ENCODE measurements at regions of chr19 and their contacts with region 1.

Region 1: DNA sequence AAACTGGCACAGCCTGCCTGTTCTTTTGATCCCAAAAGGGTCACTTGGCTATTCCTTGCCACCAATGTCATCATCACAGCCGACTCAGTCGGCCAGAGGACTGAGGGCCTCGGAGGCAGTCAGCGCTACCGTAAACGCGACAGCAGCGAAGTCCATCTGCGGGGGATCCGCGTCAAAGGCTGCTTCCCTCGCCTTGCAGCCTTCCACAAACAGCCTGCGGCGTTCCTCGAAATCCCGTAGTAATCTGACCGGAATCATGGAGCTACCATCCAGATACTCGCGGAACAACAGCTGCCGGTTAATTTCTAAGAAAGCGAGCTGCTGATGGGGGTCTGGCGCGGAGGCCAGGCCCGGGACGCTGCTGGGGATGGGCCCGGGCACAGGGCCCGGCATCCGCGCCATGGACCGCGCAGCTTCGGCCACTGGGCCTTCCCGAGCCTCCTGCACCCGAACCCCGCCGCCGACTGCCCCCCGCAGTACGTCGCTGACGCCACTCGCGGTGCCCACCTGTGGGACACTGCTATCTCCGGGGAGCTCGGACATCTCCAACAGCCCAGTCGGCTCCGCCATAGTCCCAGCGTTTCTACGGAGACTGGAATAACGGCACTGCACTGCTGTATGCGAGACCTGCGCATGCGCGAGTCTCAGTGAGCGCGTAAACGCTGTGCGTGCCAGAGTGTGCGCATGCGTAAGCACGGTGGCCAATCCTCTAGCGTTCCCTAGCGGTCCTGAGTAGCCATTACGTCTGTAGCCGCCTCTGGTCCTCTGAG is at the start of gene EID2B:
- DNase-seq: peak; percentile 94 to 96
- H3K4me3 ChIP-seq: peak within 1 kb of the TSS; percentile 90 to 91
- H3K27ac ChIP-seq: peak within 1 kb of the TSS; percentile 85 to 89
- H3K4me1 ChIP-seq: peaks cover 0 to 29% (median 21%) of the 10 kb centered on the region in 4 donors
- H3K27me3 ChIP-seq: no peaks in the 10 kb centered on the region
- CTCF ChIP-seq: peak; percentile 98 to 99

Region 2: DNA sequence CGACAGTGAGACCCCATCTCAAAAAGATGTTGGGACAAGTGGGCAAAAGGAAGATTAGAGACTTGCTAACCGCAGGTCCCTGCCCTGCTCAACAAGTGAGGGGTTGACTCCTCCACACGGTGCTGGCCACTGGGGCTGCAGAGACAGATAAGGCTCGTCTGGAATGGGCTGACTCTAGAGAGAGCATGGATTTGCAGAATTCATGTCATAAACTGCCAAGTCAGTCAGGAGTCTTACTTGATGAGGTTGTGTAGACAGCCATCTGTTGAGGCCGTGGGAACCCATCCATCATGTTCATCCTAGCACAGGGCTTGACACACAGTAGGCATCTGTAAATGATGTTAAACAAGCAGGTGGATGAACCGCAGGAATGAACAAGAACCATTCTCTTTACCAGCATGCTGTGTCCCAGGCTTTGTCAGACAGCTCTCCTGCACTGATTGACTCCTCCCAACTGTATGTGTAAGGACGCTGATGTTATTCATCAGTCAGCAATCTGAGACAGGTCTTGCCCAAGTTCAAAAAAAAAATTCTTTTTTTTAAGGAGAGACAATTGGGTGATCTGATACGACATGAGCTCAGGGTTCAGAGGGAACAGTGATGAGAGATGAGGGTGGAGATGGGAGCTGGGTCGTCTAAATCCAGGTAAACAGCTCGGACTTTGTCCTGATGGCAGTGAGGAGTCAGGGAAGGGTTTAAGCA is 150.4 kb before region 1 on chr19:
- intact Hi-C with region 1: no loop called
- DNase-seq: no peak
- H3K4me3 ChIP-seq: no peak overlapping the region
- H3K27ac ChIP-seq: no peak overlapping the region
- H3K4me1 ChIP-seq: no peaks in the 10 kb centered on the region
- H3K27me3 ChIP-seq: no peaks in the 10 kb centered on the region
- CTCF ChIP-seq: no peak

Region 3: DNA sequence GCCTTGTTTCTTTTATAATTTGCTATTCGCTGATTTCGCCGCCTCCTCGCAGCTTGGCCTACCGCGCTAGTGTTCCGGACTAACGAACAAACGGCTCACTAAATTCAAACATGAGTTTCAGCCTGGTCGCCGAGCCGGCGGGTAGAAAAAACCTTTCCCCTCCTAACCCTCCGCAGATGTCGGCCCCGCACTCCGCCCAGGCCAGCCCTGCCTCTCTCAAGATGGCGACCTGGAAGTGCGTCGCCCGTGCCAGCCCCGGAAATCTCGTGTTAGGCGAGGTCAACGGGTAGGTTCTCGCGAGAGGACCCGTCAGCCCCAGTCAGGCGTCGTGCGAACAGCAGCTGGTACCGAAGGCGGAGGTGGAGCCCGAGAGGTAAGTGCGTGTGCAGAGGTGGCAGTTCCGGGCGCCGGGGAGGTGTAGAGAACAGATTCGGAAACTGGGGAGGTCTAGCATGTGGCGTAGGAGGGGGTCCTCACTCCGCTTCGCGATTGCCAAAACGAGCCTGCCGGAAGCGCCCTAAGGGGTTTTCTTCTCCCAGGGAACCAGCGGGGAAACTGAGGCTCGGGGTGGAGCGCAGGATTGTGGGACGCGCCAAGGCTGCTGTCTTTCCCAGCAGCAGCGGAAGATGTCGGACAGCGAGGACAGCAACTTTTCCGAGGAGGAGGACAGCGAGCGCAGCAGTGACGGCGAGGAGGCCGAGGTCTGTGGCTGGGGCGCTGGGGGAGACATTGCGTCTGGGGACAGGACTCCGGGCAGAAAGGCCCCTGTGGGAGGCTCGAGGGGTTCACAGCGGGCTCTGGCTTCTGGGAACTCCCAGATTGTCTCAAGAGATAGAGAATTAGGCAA is 86.9 kb before region 1 on chr19 and contains the start of gene SUPT5H:
- intact Hi-C with region 1: loop called (anchors 5 kb)
- DNase-seq: peak; percentile 96 to 98
- H3K4me3 ChIP-seq: peak within 1 kb of the TSS; percentile 67 to 100
- H3K27ac ChIP-seq: peak within 1 kb of the TSS; percentile 86 to 87
- H3K4me1 ChIP-seq: peaks cover 0 to 52% (median 37%) of the 10 kb centered on the region in 4 donors
- H3K27me3 ChIP-seq: no peaks in the 10 kb centered on the region
- CTCF ChIP-seq: no peak

Region 4: DNA sequence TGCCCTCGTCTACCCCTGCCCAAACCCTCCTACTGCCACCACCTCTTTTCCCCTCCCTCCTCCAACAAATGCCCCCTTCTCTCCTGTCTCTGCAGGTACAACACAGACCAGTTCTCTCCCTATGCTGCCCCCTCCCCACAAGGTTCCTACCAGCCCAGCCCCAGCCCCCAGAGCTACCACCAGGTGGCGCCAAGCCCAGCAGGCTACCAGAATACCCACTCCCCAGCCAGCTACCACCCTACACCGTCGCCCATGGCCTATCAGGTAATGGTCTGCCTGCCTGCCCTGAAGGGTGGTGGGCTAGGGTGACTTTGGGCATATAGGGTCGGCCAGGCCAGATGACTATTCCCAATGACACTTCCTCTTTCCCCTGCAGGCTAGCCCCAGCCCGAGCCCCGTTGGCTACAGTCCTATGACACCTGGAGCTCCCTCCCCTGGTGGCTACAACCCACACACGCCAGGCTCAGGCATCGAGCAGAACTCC is 58.2 kb before region 1 on chr19:
- intact Hi-C with region 1: loop called (anchors 5 kb)
- DNase-seq: peak; percentile 41 to 73
- H3K4me3 ChIP-seq: no peak overlapping the region
- H3K27ac ChIP-seq: no peak overlapping the region
- H3K4me1 ChIP-seq: no peaks in the 10 kb centered on the region
- H3K27me3 ChIP-seq: no peaks in the 10 kb centered on the region
- CTCF ChIP-seq: peak; percentile 56 to 69

Region 5: GRCh38 chr19:39563408-39563807 is 31.0 kb after region 1 on chr19:
- intact Hi-C with region 1: no loop called
- DNase-seq: no peak
- H3K4me3 ChIP-seq: no peak overlapping the region
- H3K27ac ChIP-seq: no peak overlapping the region
- H3K4me1 ChIP-seq: no peaks in the 10 kb centered on the region
- H3K27me3 ChIP-seq: peaks cover 0 to 3% of the 10 kb centered on the region in 2 donors
- CTCF ChIP-seq: no peak

Measured in tibial artery (tissue), 4 donors.